Left ventricle myocardium superior (tissue), 1 donor: ENCODE measurements at regions of chr13 and their contacts with region 1.

Region 1: GRCh38 chr13:33931397-33932311 is 113.7 kb downstream of the RFC3 start:
- DNase-seq: no peak
- ATAC-seq: peak; percentile 72

Region 2: GRCh38 chr13:34076943-34077703 is 145.5 kb after region 1 on chr13:
- intact Hi-C with region 1: loop called (anchors 5 kb)
- DNase-seq: no peak
- ATAC-seq: peak; percentile 32

Region 3: DNA sequence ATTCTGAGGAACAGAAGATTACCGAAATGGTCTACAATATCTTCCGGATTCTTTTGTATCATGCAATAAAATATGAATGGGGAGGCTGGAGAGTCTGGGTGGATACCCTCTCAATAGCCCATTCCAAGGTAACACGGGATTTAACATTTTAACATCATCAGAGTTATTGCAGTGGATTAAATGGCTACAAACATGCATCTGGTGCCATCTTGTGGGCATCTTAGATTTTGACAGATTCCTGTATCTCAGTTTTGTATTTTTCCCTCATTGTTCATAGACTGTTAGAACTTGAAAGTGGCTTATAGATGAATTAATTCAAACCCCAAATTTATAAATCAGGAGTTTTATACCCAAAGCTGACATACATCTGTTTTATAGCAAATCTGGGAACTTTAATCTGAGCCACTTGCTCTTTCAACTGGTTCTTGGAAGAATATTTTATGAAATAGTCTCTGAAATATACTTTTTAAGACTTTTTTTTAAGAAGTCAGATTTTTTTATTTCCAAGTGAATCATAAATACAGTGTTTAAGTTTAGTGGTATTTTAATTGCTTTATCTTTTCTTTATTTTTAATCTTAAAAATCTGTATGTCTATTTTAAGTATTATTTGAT is 1225.6 kb after region 1 on chr13:
- intact Hi-C with region 1: loop called (anchors 5 kb)
- DNase-seq: no peak
- ATAC-seq: peak; percentile 49